ENCODE measurements at regions of chr15 and their contacts with region 1.

Region 1: GRCh38 chr15:69160141-69160993 is at the start of gene GLCE:
- DNase-seq: peak; percentile 94 to 98
- H3K4me3 ChIP-seq: peak within 1 kb of the TSS; percentile 88
- H3K27ac ChIP-seq: peak within 1 kb of the TSS; percentile 67
- H3K4me1 ChIP-seq: peaks cover 20% of the 10 kb centered on the region
- H3K27me3 ChIP-seq: no peaks in the 10 kb centered on the region
- CTCF ChIP-seq: no peak
- total RNA-seq, gene GLCE: 24.7 and 31.3 TPM in 2 replicates

Region 2: DNA sequence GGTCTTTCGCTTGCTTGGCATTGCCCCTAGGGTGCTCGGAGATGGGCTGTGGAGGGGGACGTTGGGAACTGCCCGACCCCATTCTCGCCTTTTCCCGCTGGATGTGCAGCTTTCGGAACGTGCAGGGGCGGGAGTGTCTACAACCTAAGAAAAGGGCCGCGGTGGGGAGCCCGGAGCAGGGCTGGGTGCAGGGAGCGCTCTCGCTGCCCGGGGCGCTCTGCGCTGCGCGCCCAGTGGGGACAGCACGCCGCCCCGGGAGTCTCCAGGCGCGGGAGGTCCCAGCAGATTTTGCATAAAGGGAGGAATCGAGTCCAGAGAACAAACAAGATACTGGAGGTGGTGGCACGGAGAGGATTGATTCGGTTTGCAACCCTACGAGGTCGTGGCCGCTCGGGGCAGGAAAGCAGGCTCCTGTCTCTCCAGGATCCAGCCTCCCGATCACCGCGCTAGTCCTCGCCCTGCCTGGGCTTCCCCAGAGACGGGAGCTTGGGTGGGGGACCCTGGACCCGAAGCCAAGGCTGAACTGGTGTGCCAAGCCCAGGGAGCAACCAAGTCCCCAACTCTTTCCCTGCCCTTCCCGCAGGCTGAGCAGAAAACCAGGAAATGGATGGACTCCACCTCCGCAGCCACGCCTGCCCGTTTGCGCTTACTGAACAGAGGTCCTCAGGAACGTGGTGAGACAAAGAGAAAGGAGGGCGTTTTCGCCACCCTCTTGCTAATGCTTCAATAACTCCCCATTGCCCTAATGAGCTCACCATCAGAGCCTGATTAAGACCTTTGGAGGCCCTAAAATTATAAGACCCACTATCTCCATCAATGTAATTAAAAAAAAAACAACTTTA is 86.1 kb before region 1 on chr15:
- CTCF ChIA-PET with region 1: no interaction called
- POLR2A ChIA-PET with region 1: interaction called, 4 read pairs
- intact Hi-C with region 1: loop called (anchors 1 kb)
- DNase-seq: peak; percentile 59 to 76
- H3K4me3 ChIP-seq: peak overlapping the region; percentile 79
- H3K27ac ChIP-seq: peak overlapping the region; percentile 73
- H3K4me1 ChIP-seq: peaks cover 27% of the 10 kb centered on the region
- H3K27me3 ChIP-seq: no peaks in the 10 kb centered on the region
- CTCF ChIP-seq: no peak

Region 3: GRCh38 chr15:69093127-69094013 is 67.0 kb before region 1 on chr15:
- CTCF ChIA-PET with region 1: interaction called, 3 read pairs
- POLR2A ChIA-PET with region 1: interaction called, 6 read pairs
- intact Hi-C with region 1: loop called (anchors 1 kb)
- DNase-seq: peak; percentile 86 to 89
- H3K4me3 ChIP-seq: peak overlapping the region; percentile 39; the same call in 1 of the 2 replicates
- H3K27ac ChIP-seq: peak overlapping the region; percentile 100
- H3K4me1 ChIP-seq: peaks cover 62% of the 10 kb centered on the region
- H3K27me3 ChIP-seq: no peaks in the 10 kb centered on the region
- CTCF ChIP-seq: no peak

Region 4: GRCh38 chr15:69222001-69222474 is 61.7 kb after region 1 on chr15:
- CTCF ChIA-PET with region 1: no interaction called
- POLR2A ChIA-PET with region 1: no interaction called
- intact Hi-C with region 1: no loop called
- DNase-seq: no peak
- H3K4me3 ChIP-seq: no peak overlapping the region
- H3K27ac ChIP-seq: no peak overlapping the region
- H3K4me1 ChIP-seq: peaks cover 16% of the 10 kb centered on the region
- H3K27me3 ChIP-seq: no peaks in the 10 kb centered on the region
- CTCF ChIP-seq: no peak

Region 5: GRCh38 chr15:69265347-69265955 is 105.1 kb after region 1 on chr15:
- CTCF ChIA-PET with region 1: interaction called, 14 read pairs
- POLR2A ChIA-PET with region 1: interaction called, 4 read pairs
- intact Hi-C with region 1: loop called (anchors 5 kb)
- DNase-seq: no peak
- H3K4me3 ChIP-seq: no peak overlapping the region
- H3K27ac ChIP-seq: no peak overlapping the region
- H3K4me1 ChIP-seq: no peaks in the 10 kb centered on the region
- H3K27me3 ChIP-seq: no peaks in the 10 kb centered on the region
- CTCF ChIP-seq: peak; percentile 66

Region 6: DNA sequence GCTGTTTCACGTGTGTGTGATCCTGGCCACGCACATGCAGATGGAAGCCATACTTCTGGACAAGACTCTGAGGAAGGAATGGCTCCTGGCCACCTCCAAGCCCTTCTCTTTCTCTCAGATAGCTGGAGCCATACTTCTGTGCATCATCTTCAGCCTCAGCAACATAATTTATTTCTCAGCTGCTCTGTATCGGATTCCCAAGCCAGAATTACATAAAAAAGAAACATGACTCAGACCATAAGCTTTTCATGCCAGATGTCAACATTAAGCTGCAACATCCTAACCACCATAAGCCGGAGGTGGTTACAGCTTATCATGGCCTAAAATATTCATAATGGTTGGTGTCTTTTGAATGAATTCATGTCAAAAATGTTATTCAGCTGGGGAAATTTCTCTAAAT is 243.2 kb after region 1 on chr15:
- CTCF ChIA-PET with region 1: no interaction called
- POLR2A ChIA-PET with region 1: interaction called, 10 read pairs
- intact Hi-C with region 1: no loop called
- DNase-seq: no peak
- H3K4me3 ChIP-seq: no peak overlapping the region
- H3K27ac ChIP-seq: no peak overlapping the region
- H3K4me1 ChIP-seq: 0 out of 2 replicates have a peak, but pooled peaks cover 8% of the 10 kb centered on the region
- H3K27me3 ChIP-seq: no peaks in the 10 kb centered on the region
- CTCF ChIP-seq: no peak

Region 7: GRCh38 chr15:69413822-69414700 is 253.7 kb after region 1 on chr15 and contains the start of gene KIF23:
- CTCF ChIA-PET with region 1: no interaction called
- POLR2A ChIA-PET with region 1: interaction called, 5 read pairs
- intact Hi-C with region 1: loop called (anchors 2 kb)
- DNase-seq: peak; percentile 89 to 92
- H3K4me3 ChIP-seq: peak within 1 kb of the TSS; percentile 86
- H3K27ac ChIP-seq: peak within 1 kb of the TSS; percentile 63
- H3K4me1 ChIP-seq: peaks cover 39% of the 10 kb centered on the region
- H3K27me3 ChIP-seq: no peaks in the 10 kb centered on the region
- CTCF ChIP-seq: no peak
- total RNA-seq, gene KIF23: 78.7 and 100 TPM in 2 replicates